ENCODE measurements at regions of chr14 and their contacts with region 1.

Region 1: GRCh38 chr14:104639889-104640548 is 35.4 kb upstream of the TMEM179 start:
- DNase-seq: peak; percentile 97
- H3K4me3 ChIP-seq: no peak overlapping the region; a peak in 1 of 4 replicates
- H3K27ac ChIP-seq: no peak overlapping the region; a peak in 1 of 4 replicates
- H3K4me1 ChIP-seq: peaks cover 0 to 4% of the 10 kb centered on the region in 2 experiments; a peak in 2 of 4 replicates
- H3K27me3 ChIP-seq: no peaks in the 10 kb centered on the region
- CTCF ChIP-seq: peak; percentile 92
- EP300 ChIP-seq: no peak
- RAD21 ChIP-seq: peak; percentile 98

Region 2: GRCh38 chr14:104424406-104425072 is 215.5 kb before region 1 on chr14:
- CTCF ChIA-PET with region 1: no interaction called
- POLR2A ChIA-PET with region 1: no interaction called
- DNase-seq: peak; percentile 88
- H3K4me3 ChIP-seq: no peak overlapping the region
- H3K27ac ChIP-seq: peak overlapping the region in 1 of 2 experiments; percentile 39; a peak in 1 of 4 replicates
- H3K4me1 ChIP-seq: peaks cover 0 to 55% of the 10 kb centered on the region in 2 experiments; a peak in 1 of 4 replicates
- H3K27me3 ChIP-seq: no peaks in the 10 kb centered on the region
- CTCF ChIP-seq: no peak
- EP300 ChIP-seq: no peak
- RAD21 ChIP-seq: no peak; the same call in 1 of the 2 replicates

Region 3: GRCh38 chr14:104486222-104486923 is 153.6 kb before region 1 on chr14:
- CTCF ChIA-PET with region 1: no interaction called
- POLR2A ChIA-PET with region 1: no interaction called
- DNase-seq: no peak
- H3K4me3 ChIP-seq: no peak overlapping the region
- H3K27ac ChIP-seq: no peak overlapping the region
- H3K4me1 ChIP-seq: no peaks in the 10 kb centered on the region; a peak in 1 of 4 replicates
- H3K27me3 ChIP-seq: no peaks in the 10 kb centered on the region
- CTCF ChIP-seq: no peak
- EP300 ChIP-seq: no peak
- RAD21 ChIP-seq: no peak

Region 4: DNA sequence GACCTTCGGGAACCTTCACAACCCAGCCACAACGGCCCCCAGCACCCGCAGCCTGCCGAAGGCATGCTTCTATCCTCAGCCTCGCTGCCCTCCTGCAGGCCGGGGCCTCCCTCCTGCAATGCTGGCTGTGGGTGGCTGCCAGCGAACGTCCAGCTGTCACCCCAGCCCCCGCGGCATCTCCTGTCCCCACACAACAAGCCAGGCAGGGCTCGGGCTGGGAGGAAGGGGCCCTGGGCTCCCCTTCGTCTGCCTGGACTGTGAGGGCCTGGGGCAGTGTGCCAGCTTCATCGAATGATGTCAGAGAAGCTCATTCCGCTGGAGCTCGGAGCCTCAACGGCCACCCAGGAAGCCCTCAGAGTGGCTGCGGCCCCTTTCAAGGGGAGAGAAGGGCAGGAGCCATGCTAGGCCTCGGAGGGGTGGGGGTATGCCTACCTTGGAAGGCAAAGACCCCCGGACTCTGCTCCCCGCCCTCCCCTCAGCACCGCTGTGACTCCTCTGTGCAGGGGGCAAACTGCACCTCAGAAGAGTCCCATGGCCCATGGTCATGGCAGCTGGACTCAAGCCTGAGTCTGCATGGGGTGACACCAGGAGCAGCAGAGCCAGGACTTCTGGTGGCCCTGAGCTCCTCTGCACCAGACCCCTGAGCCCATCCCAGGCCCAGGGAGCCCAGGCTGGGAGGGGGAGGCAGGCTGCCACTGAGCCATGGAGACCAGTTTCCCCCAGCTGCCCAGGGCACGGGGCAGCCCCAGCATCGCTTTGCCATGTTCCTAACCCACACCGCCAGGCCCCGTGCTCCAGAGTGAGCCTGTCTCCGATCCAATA is 85.2 kb before region 1 on chr14:
- CTCF ChIA-PET with region 1: interaction called, 10 read pairs
- POLR2A ChIA-PET with region 1: no interaction called
- DNase-seq: peak; percentile 68
- H3K4me3 ChIP-seq: no peak overlapping the region
- H3K27ac ChIP-seq: peak overlapping the region in 1 of 2 experiments; percentile 30; a peak in 2 of 4 replicates
- H3K4me1 ChIP-seq: peaks cover 0 to 33% of the 10 kb centered on the region in 2 experiments; a peak in 1 of 4 replicates
- H3K27me3 ChIP-seq: no peaks in the 10 kb centered on the region
- CTCF ChIP-seq: no peak
- EP300 ChIP-seq: no peak
- RAD21 ChIP-seq: no peak

Region 5: DNA sequence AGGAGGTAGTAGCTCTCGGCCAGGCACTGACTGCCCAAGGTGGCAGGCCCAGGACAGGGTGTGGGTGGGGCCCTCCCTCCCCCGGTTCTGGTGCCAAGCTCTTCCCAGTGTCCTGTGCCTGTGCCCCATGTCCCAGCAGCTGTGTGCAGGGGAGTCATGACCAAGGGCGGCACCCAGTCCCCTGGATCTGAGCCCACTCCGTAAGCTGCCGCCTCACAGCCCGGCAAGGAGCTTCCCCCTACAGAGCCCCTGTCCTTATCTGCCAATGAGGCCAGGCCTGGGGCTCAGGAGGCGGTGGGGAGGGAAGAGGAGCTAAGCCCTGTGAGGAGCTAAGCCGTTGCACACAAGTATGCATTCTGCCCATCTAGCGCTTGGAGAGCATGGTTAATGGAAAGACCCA is 66.1 kb before region 1 on chr14:
- CTCF ChIA-PET with region 1: interaction called, 15 read pairs
- POLR2A ChIA-PET with region 1: no interaction called
- DNase-seq: no peak
- H3K4me3 ChIP-seq: no peak overlapping the region
- H3K27ac ChIP-seq: no peak overlapping the region
- H3K4me1 ChIP-seq: peaks cover 0 to 58% of the 10 kb centered on the region in 2 experiments; a peak in 1 of 4 replicates
- H3K27me3 ChIP-seq: no peaks in the 10 kb centered on the region
- CTCF ChIP-seq: no peak
- EP300 ChIP-seq: no peak
- RAD21 ChIP-seq: no peak

Region 6: DNA sequence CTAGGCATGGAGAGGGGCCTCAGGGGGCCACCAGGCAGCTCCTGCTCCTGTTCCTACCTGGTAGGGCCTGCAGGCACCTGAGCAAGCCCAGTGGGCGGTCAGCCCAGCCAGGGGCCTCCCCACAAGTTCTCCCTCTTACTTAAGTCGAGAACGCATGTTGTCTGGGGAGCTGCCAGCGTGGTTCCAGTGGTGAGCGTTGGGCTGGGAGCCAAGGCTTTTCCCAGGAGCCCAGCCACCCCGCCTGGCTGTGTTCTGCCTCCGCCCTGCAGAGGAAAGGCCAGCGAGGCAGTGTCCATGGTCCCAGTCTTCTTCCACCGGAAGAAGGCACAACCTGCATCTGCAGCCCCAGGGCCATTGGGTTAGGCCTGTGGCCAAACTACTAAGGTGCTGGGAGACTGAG is 59.1 kb before region 1 on chr14:
- CTCF ChIA-PET with region 1: interaction called, 10 read pairs
- POLR2A ChIA-PET with region 1: no interaction called
- DNase-seq: peak; percentile 83
- H3K4me3 ChIP-seq: no peak overlapping the region
- H3K27ac ChIP-seq: peak overlapping the region in 1 of 2 experiments; percentile 81; a peak in 2 of 4 replicates
- H3K4me1 ChIP-seq: peaks cover 0 to 95% of the 10 kb centered on the region in 2 experiments; a peak in 1 of 4 replicates
- H3K27me3 ChIP-seq: no peaks in the 10 kb centered on the region
- CTCF ChIP-seq: no peak
- EP300 ChIP-seq: 0 out of 4 replicates have a peak, but pooled peaks of 1 of the 2 experiments have one; percentile 18
- RAD21 ChIP-seq: no peak

Region 7: GRCh38 chr14:104600141-104600643 is 39.8 kb before region 1 on chr14:
- CTCF ChIA-PET with region 1: interaction called, 11 read pairs
- POLR2A ChIA-PET with region 1: no interaction called
- DNase-seq: peak; percentile 94
- H3K4me3 ChIP-seq: peak overlapping the region in 1 of 2 experiments; percentile 4; a peak in 1 of 4 replicates
- H3K27ac ChIP-seq: peak overlapping the region in 1 of 2 experiments; percentile 90; a peak in 2 of 4 replicates
- H3K4me1 ChIP-seq: peaks cover 0 to 86% of the 10 kb centered on the region in 2 experiments; a peak in 2 of 4 replicates
- H3K27me3 ChIP-seq: no peaks in the 10 kb centered on the region
- CTCF ChIP-seq: no peak
- EP300 ChIP-seq: peak in 1 of 2 experiments; percentile 67; a peak in 1 of 4 replicates
- RAD21 ChIP-seq: no peak

Region 8: GRCh38 chr14:104708606-104709268 is 68.7 kb after region 1 on chr14:
- CTCF ChIA-PET with region 1: interaction called, 10 read pairs
- POLR2A ChIA-PET with region 1: no interaction called
- DNase-seq: peak; percentile 97
- H3K4me3 ChIP-seq: no peak overlapping the region; a peak in 1 of 4 replicates
- H3K27ac ChIP-seq: no peak overlapping the region
- H3K4me1 ChIP-seq: no peaks in the 10 kb centered on the region; a peak in 1 of 4 replicates
- H3K27me3 ChIP-seq: no peaks in the 10 kb centered on the region
- CTCF ChIP-seq: peak; percentile 96
- EP300 ChIP-seq: no peak
- RAD21 ChIP-seq: peak; percentile 79

Region 9: GRCh38 chr14:104895786-104896661 is 256.0 kb after region 1 on chr14:
- CTCF ChIA-PET with region 1: no interaction called
- POLR2A ChIA-PET with region 1: no interaction called
- DNase-seq: peak; percentile 61
- H3K4me3 ChIP-seq: no peak overlapping the region
- H3K27ac ChIP-seq: no peak overlapping the region
- H3K4me1 ChIP-seq: peaks cover 0 to 6% of the 10 kb centered on the region in 2 experiments; a peak in 1 of 4 replicates
- H3K27me3 ChIP-seq: no peaks in the 10 kb centered on the region
- CTCF ChIP-seq: no peak
- EP300 ChIP-seq: no peak
- RAD21 ChIP-seq: no peak

Region 10: GRCh38 chr14:105061428-105062047 is 421.5 kb after region 1 on chr14:
- CTCF ChIA-PET with region 1: no interaction called
- POLR2A ChIA-PET with region 1: no interaction called
- DNase-seq: no peak
- H3K4me3 ChIP-seq: no peak overlapping the region
- H3K27ac ChIP-seq: no peak overlapping the region
- H3K4me1 ChIP-seq: no peaks in the 10 kb centered on the region; a peak in 1 of 4 replicates
- H3K27me3 ChIP-seq: no peaks in the 10 kb centered on the region
- CTCF ChIP-seq: no peak
- EP300 ChIP-seq: no peak
- RAD21 ChIP-seq: no peak